ENCODE measurements at regions of chr6 and their contacts with region 1.

Region 1: GRCh38 chr6:45930420-45931040 is 85.1 kb downstream of the CLIC5 start:
- DNase-seq: peak; percentile 47
- ATAC-seq: peak; percentile 92
- H3K4me3 ChIP-seq: no peak overlapping the region
- H3K27ac ChIP-seq: no peak overlapping the region
- H3K4me1 ChIP-seq: no peaks in the 10 kb centered on the region
- H3K27me3 ChIP-seq: peaks cover 5 to 7% of the 10 kb centered on the region in 2 experiments; a peak in 3 of 5 replicates
- CTCF ChIP-seq: peak; percentile 91
- EP300 ChIP-seq: no peak
- POLR2A ChIP-seq: no peak
- RAD21 ChIP-seq: peak; percentile 58

Region 2: GRCh38 chr6:46410334-46410953 is 479.9 kb after region 1 on chr6:
- CTCF ChIA-PET with region 1: no interaction called
- POLR2A ChIA-PET with region 1: no interaction called
- in situ Hi-C with region 1: no loop called
- intact Hi-C with region 1: loop called (anchors 1 kb)
- DNase-seq: peak; percentile 57
- ATAC-seq: no peak; the same call in 2 of the 3 replicates
- H3K4me3 ChIP-seq: no peak overlapping the region
- H3K27ac ChIP-seq: no peak overlapping the region
- H3K4me1 ChIP-seq: no peaks in the 10 kb centered on the region
- H3K27me3 ChIP-seq: no peaks in the 10 kb centered on the region
- CTCF ChIP-seq: peak; percentile 80
- EP300 ChIP-seq: no peak
- POLR2A ChIP-seq: no peak
- RAD21 ChIP-seq: peak; percentile 77

Region 3: DNA sequence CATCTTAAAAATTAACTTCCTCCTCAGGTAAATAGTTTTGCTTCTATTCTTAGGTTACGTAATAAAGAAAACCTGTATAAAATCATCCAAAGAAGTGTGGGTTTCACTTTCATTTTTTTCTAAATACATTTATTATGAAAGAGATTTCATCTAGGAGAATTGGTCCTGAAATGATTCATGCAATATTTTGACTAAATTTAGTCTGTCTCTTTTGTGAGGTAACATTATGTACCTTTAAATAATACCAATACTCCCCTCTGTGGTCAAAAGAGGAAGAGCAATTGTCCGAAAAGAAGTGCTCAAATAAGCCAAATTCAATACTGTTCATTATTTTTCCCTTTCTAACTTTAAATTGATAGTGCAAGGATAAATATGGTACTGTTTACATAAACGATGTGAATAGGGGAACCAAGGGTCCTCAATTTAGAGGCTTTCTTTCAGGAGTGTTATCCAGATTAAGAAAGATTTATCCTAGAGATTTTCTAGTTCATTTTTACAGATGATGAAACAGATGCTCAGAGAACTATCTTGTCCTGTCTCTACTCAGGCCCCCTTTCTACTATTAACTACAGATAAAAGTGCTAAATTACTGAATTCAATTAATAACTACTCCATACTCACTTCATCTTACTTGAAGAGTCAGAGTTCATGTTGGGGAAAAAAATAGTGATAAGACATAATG is 695.8 kb after region 1 on chr6:
- CTCF ChIA-PET with region 1: no interaction called
- POLR2A ChIA-PET with region 1: no interaction called
- in situ Hi-C with region 1: no loop called
- intact Hi-C with region 1: loop called (anchors 1 kb)
- DNase-seq: peak; percentile 33
- ATAC-seq: peak; percentile 58
- H3K4me3 ChIP-seq: no peak overlapping the region
- H3K27ac ChIP-seq: no peak overlapping the region
- H3K4me1 ChIP-seq: no peaks in the 10 kb centered on the region
- H3K27me3 ChIP-seq: no peaks in the 10 kb centered on the region
- CTCF ChIP-seq: peak; percentile 63
- EP300 ChIP-seq: no peak
- POLR2A ChIP-seq: no peak
- RAD21 ChIP-seq: no peak

Measured in HepG2 (cell line).